ENCODE measurements at regions of chr3 and their contacts with region 1.

Region 1: DNA sequence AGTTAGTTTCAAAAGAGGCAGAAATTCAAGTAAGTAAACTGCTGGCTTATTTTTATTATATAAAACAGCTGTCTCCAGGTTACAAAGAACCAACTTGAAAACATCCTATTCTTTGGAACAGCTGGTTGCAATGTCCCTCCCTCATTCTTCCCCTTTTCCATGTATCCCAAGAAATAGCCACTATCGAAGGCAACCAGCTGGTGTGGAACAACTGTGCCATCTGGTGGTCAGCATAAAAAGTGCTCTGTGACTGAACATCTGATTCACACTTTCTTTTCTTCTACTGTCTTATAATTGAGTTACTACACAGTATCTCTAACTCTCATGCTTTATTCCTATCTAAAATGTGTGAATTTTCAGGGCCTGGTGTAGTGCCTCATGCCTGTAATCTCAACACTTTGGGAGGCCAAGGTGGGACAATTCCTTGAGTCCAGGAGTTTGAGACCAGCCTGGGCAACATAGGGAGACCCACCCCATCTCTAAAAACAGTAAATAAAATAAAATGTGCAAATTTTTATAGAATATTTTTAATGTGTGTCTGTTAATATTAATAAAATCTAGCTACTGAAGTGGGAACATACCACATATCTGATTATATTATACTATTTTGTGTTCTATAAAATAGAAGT is 9.6 kb downstream of the OSBPL11 start:
- DNase-seq: no peak
- ATAC-seq: peak; percentile 66
- H3K4me3 ChIP-seq: no peak overlapping the region
- H3K27ac ChIP-seq: no peak overlapping the region
- H3K4me1 ChIP-seq: peaks cover 10% of the 10 kb centered on the region; the same call in 1 of the 2 replicates
- H3K27me3 ChIP-seq: no peaks in the 10 kb centered on the region
- CTCF ChIP-seq: peak; percentile 82 to 91 (median 91)
- EP300 ChIP-seq: no peak
- POLR2A ChIP-seq: no peak
- RAD21 ChIP-seq: peak; percentile 93

Region 2: GRCh38 chr3:124761250-124761796 is 824.4 kb before region 1 on chr3:
- CTCF ChIA-PET with region 1: interaction called, 39 read pairs
- POLR2A ChIA-PET with region 1: no interaction called
- RAD21 ChIA-PET with region 1: interaction called, 20 read pairs
- SMC1A ChIA-PET with region 1: interaction called, 7 read pairs
- in situ Hi-C with region 1: loop called (anchors 5 kb)
- intact Hi-C with region 1: no loop called
- DNase-seq: peak; percentile 49
- ATAC-seq: peak; percentile 91
- H3K4me3 ChIP-seq: no peak overlapping the region
- H3K27ac ChIP-seq: no peak overlapping the region
- H3K4me1 ChIP-seq: no peaks in the 10 kb centered on the region
- H3K27me3 ChIP-seq: no peaks in the 10 kb centered on the region; a peak in 2 of 4 replicates
- CTCF ChIP-seq: peak; percentile 94 to 96 (median 94)
- EP300 ChIP-seq: no peak
- POLR2A ChIP-seq: no peak
- RAD21 ChIP-seq: peak; percentile 93

Region 3: DNA sequence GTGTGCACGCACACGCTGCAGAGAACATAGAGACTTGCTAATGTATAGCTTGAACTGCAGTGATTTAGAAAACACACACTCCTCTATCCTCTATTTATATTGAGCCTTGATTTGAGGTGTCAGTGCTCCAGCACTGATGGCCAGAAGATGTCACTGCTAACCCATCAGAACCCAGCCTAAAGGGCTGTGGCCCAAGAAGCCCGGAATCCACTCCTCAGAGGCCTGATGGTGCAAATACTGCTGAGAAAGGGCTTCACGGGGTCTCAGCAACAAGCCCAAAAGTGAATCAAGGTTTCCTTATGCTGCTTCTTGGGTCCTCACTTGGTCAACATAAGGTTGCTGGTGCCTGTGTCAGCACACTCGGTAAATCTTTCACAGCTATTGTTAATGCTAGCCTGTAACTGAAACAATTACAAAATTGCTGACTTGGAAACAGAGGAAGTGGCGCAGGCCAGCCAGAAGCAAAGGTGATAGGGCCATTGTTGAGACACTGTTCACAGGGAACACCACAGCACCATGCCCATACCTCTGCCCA is 590.2 kb before region 1 on chr3:
- CTCF ChIA-PET with region 1: interaction called, 56 read pairs
- POLR2A ChIA-PET with region 1: interaction called, 3 read pairs
- RAD21 ChIA-PET with region 1: interaction called, 15 read pairs
- SMC1A ChIA-PET with region 1: interaction called, 22 read pairs
- in situ Hi-C with region 1: no loop called
- intact Hi-C with region 1: loop called (anchors 10 kb)
- DNase-seq: peak; percentile 20
- ATAC-seq: peak; percentile 96
- H3K4me3 ChIP-seq: no peak overlapping the region
- H3K27ac ChIP-seq: peak overlapping the region; percentile 38
- H3K4me1 ChIP-seq: peaks cover 5% of the 10 kb centered on the region
- H3K27me3 ChIP-seq: no peaks in the 10 kb centered on the region
- CTCF ChIP-seq: peak; percentile 66 to 92 (median 75); a peak in 4 of 6 replicates
- EP300 ChIP-seq: no peak
- POLR2A ChIP-seq: no peak
- RAD21 ChIP-seq: peak; percentile 91

Region 4: GRCh38 chr3:125437631-125438435 is 147.9 kb before region 1 on chr3:
- CTCF ChIA-PET with region 1: interaction called, 90 read pairs
- POLR2A ChIA-PET with region 1: interaction called, 4 read pairs
- RAD21 ChIA-PET with region 1: interaction called, 20 read pairs
- SMC1A ChIA-PET with region 1: interaction called, 61 read pairs
- in situ Hi-C with region 1: no loop called
- intact Hi-C with region 1: no loop called
- DNase-seq: no peak
- ATAC-seq: peak; percentile 45
- H3K4me3 ChIP-seq: no peak overlapping the region
- H3K27ac ChIP-seq: no peak overlapping the region
- H3K4me1 ChIP-seq: peaks cover 19% of the 10 kb centered on the region
- H3K27me3 ChIP-seq: no peaks in the 10 kb centered on the region
- CTCF ChIP-seq: peak; percentile 92 to 96 (median 92)
- EP300 ChIP-seq: no peak
- POLR2A ChIP-seq: no peak
- RAD21 ChIP-seq: peak; percentile 97

Region 5: DNA sequence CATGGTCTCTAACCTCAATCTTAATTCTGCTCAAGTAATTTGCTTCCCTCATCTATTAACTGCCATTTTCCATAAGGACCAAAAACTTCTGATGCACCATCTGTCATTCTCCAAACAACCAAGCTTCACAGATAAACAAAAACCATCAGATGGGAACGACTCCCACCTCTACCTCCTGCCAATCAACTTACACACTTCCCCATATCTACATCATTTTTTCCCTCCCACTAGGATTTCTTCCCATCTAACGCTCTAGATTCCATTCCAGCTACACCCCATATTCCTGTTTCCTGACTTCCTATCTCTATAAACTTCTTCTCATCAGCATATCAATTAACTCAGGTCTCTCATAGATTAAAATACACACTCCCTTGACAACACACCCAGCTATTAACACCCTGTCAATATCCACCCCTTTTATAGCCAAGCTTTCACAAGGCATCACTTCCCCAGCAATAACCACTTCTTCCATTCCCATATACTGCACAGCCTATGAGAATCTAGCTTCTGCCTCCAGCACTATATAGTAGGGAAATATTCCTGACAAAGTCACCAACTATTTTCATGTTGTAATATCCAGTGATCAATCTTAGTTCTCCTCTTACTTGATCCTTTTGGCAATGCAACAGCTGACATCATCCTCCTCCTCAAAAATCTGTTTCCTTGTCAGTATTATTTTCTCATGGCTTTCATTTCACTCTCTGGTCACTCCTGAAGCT is 104.9 kb before region 1 on chr3:
- CTCF ChIA-PET with region 1: interaction called, 13 read pairs
- POLR2A ChIA-PET with region 1: interaction called, 3 read pairs
- RAD21 ChIA-PET with region 1: interaction called, 3 read pairs
- SMC1A ChIA-PET with region 1: interaction called, 3 read pairs
- in situ Hi-C with region 1: no loop called
- intact Hi-C with region 1: loop called (anchors 10 kb)
- DNase-seq: no peak
- ATAC-seq: no peak
- H3K4me3 ChIP-seq: no peak overlapping the region
- H3K27ac ChIP-seq: no peak overlapping the region
- H3K4me1 ChIP-seq: no peaks in the 10 kb centered on the region
- H3K27me3 ChIP-seq: no peaks in the 10 kb centered on the region
- CTCF ChIP-seq: no peak
- EP300 ChIP-seq: no peak
- POLR2A ChIP-seq: no peak
- RAD21 ChIP-seq: no peak

Region 6: DNA sequence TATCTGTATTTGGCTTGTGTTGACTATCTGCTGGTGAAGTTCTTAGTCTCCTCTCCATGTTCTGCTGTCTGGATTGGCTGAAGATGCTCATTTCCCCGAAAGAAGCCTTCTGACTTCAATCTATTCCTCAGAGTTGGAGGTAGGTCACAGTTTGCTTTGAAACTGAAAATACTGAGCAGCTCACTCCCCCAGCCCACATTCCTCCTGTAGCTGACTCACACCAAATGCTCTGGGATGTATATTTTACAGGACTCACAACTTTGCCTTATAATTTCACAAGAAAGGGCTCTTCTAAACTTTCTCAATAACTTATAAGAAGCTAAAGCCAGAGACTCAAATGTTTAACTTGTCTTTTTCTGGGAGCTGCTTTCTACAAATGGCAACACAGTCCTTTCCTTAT is 29.4 kb before region 1 on chr3:
- CTCF ChIA-PET with region 1: interaction called, 10 read pairs
- POLR2A ChIA-PET with region 1: interaction called, 6 read pairs
- RAD21 ChIA-PET with region 1: no interaction called
- SMC1A ChIA-PET with region 1: interaction called, 3 read pairs
- in situ Hi-C with region 1: no loop called
- intact Hi-C with region 1: no loop called
- DNase-seq: no peak
- ATAC-seq: no peak
- H3K4me3 ChIP-seq: no peak overlapping the region
- H3K27ac ChIP-seq: no peak overlapping the region
- H3K4me1 ChIP-seq: no peaks in the 10 kb centered on the region
- H3K27me3 ChIP-seq: no peaks in the 10 kb centered on the region
- CTCF ChIP-seq: no peak
- EP300 ChIP-seq: no peak
- POLR2A ChIP-seq: no peak
- RAD21 ChIP-seq: no peak

Region 7: DNA sequence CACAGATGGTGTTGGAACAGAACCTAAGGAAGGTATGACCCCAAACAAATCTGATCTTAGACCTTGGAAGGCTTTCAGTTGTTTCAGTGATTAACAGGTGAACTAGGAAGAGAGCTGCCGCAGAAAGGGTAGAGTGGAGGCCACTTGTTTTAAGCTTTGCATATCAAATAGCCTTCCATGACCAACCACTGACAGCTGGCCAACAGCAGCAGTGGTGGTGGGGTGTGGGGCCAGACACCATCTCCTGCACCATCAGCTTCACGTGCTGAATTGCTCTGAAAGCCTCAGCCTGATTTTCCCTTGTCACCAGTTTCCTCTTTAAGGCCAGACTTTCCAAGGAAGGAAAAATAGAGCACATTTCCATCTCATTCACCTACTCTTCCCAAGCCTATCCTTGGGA is 26.2 kb after region 1 on chr3:
- CTCF ChIA-PET with region 1: no interaction called
- POLR2A ChIA-PET with region 1: no interaction called
- RAD21 ChIA-PET with region 1: no interaction called
- SMC1A ChIA-PET with region 1: no interaction called
- in situ Hi-C with region 1: no loop called
- intact Hi-C with region 1: no loop called
- DNase-seq: no peak
- ATAC-seq: no peak
- H3K4me3 ChIP-seq: no peak overlapping the region
- H3K27ac ChIP-seq: no peak overlapping the region
- H3K4me1 ChIP-seq: peaks cover 7% of the 10 kb centered on the region
- H3K27me3 ChIP-seq: no peaks in the 10 kb centered on the region
- CTCF ChIP-seq: no peak
- EP300 ChIP-seq: no peak
- POLR2A ChIP-seq: no peak
- RAD21 ChIP-seq: no peak

Measured in GM12878 (cell line).